AG04450 (cell line): ENCODE measurements at regions of chr10 and their contacts with region 1.

Region 1: DNA sequence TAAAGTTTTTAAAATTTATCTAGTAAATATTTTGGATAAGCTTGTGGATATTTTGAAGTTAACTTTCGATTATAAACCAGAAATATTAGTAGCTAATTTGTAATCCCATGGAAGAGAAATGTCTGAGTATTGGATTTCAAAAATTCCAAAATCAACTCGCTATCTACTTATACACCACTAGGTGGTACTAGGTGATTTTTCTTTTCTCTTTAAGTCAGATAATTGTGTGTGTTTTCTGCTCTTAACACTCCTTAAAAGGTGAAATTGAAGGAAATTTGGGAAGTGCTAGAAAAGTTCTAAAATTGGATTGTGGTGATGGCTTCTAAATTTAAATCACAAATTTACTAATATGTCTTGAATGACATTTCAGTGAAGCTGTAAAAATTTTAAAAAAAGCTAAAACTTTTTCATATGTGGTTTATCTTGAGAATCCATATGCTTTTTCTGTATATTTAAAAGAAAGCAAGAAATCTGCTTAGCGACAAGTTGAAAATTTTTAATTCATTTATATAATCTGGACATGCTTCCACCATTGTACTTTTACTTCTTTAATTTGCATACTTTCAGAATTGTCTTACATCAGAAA is 90.2 kb downstream of the IPMK start:
- DNase-seq: no peak
- H3K4me3 ChIP-seq: no peak overlapping the region
- H3K27ac ChIP-seq: no peak overlapping the region
- H3K27me3 ChIP-seq: no peaks in the 10 kb centered on the region
- CTCF ChIP-seq: peak; percentile 66

Region 2: GRCh38 chr10:58028597-58029366 is 148.7 kb before region 1 on chr10:
- CTCF ChIA-PET with region 1: no interaction called
- POLR2A ChIA-PET with region 1: no interaction called
- DNase-seq: peak; percentile 70
- H3K4me3 ChIP-seq: no peak overlapping the region
- H3K27ac ChIP-seq: no peak overlapping the region
- H3K27me3 ChIP-seq: no peaks in the 10 kb centered on the region
- CTCF ChIP-seq: no peak

Region 3: DNA sequence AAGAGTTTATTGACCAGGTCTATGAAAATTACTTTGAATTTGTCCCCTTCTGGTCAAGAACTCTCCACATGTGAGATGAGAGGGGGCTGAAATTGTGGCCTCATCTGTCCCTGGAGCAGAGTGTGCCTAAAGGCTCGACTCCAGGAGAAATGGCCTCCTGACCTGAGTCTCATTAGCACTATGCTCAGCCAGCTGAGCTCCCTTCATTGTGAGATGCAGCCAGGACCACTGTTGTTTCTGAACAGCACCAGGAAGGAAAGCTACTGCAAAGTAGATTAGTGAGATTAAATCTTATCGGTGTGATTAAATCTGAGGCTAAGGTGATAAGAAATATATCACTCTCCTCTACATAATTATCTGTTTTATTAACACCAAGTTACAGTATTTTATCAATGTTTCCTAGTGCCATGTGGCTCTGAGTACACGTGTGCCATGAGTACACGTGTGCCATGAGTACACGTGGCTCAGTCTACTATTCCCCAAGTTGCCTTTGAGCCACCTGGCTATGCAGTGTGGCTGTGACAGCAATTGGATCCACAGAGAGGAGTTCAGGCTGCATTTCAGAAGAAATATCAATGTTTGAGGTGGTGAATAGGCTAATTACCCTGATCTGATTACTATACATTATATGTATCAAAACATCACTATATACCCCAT is 36.6 kb before region 1 on chr10:
- CTCF ChIA-PET with region 1: no interaction called
- POLR2A ChIA-PET with region 1: no interaction called
- DNase-seq: no peak
- H3K4me3 ChIP-seq: no peak overlapping the region
- H3K27ac ChIP-seq: no peak overlapping the region
- H3K27me3 ChIP-seq: no peaks in the 10 kb centered on the region
- CTCF ChIP-seq: no peak

Region 4: DNA sequence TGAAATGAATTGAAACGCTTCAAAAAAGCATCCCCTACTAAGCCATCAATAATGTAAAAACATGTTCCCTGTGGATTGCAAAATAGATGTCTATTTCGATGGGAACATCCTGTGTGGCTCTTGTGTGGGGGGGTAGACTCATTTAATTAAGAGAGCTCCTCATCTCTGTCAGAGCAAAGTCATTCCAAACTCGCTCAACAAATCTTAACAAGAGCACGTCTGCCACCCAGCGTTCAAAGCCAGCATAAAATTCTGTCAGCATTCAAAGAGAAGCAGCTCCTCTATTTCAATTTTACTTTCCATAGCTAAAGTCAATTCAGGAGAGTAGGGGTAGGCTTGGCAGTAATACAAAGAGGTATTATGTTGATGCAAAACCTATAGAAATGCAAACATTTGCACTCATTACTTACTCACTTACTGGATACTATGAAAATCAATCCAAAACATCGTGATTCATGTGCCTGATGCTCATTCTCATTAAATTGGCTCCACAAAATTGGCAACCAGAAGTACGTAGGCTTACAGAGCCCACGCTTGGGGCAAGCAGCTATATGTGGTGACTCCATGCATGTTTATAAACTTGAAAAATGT is 24.7 kb before region 1 on chr10:
- CTCF ChIA-PET with region 1: interaction called, 19 read pairs
- POLR2A ChIA-PET with region 1: no interaction called
- DNase-seq: peak; percentile 23
- H3K4me3 ChIP-seq: no peak overlapping the region
- H3K27ac ChIP-seq: no peak overlapping the region
- H3K27me3 ChIP-seq: no peaks in the 10 kb centered on the region
- CTCF ChIP-seq: peak; percentile 75

Region 5: DNA sequence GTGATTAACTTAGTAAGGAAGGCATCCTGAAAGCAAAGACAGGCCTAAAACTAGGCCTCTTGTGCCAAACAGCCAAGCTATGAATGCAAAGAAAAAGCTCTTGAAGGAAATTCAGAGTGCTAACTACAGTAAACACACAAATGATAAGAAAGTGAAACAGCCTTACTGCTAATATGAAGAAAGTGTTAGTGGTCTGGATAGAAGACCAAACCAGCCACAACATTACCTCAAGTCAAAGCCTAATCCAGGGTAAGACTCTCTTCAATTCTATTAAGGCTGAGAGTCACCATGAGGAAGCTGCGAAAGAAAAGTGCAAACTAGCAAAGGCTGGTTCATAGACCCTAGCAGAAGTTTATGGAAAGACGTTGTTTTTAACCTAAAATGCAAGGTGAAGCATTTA is 24.2 kb after region 1 on chr10:
- CTCF ChIA-PET with region 1: interaction called, 12 read pairs
- POLR2A ChIA-PET with region 1: no interaction called
- DNase-seq: no peak
- H3K4me3 ChIP-seq: no peak overlapping the region
- H3K27ac ChIP-seq: no peak overlapping the region
- H3K27me3 ChIP-seq: no peaks in the 10 kb centered on the region
- CTCF ChIP-seq: no peak

Region 6: DNA sequence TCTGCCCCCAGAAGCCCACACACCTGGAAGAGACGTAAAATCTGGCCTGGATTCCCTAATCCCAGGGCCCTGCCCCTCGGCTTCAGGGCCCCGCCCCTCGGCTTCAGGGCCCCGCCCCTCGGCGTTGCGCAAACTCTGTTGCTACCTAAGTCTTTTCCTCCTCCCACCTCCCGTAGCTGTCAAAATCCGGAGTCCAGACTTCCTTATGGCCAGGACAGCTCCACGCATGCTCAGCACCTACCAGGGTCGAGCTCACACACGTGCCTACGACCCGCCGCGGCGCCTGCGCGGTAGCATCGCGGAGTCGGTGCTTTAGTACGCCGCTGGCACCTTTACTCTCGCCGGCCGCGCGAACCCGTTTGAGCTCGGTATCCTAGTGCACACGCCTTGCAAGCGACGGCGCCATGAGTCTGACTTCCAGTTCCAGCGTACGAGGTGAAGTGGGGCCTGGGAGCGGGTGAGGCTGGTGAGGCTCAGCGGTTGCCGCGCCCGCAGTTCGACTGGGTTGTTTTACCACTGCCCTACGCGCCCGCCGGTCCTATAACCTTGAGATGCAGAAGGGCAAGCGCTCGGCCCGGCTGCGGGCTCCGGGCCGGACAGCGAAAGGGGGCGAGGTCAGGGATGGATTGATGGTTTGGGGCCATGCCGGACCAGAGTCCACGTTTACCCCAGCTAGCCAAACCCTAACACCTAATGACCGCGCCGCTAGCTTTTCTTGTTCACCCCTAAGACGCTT is 91.6 kb after region 1 on chr10 and contains the start of gene CISD1:
- CTCF ChIA-PET with region 1: interaction called, 12 read pairs
- POLR2A ChIA-PET with region 1: no interaction called
- DNase-seq: peak; percentile 99
- H3K4me3 ChIP-seq: peak within 1 kb of the TSS; percentile 87
- H3K27ac ChIP-seq: peak within 1 kb of the TSS; percentile 94
- H3K27me3 ChIP-seq: no peaks in the 10 kb centered on the region
- CTCF ChIP-seq: no peak
- polyA plus RNA-seq, gene CISD1: 59.9 and 80.0 TPM in 2 replicates

Region 7: GRCh38 chr10:58291538-58292174 is 114.2 kb after region 1 on chr10:
- CTCF ChIA-PET with region 1: interaction called, 266 read pairs
- POLR2A ChIA-PET with region 1: no interaction called
- DNase-seq: no peak
- H3K4me3 ChIP-seq: no peak overlapping the region
- H3K27ac ChIP-seq: no peak overlapping the region
- H3K27me3 ChIP-seq: no peaks in the 10 kb centered on the region
- CTCF ChIP-seq: peak; percentile 82

Region 8: GRCh38 chr10:58305821-58306220 is 128.4 kb after region 1 on chr10:
- CTCF ChIA-PET with region 1: interaction called, 48 read pairs
- POLR2A ChIA-PET with region 1: no interaction called
- DNase-seq: no peak
- H3K4me3 ChIP-seq: no peak overlapping the region
- H3K27ac ChIP-seq: no peak overlapping the region
- H3K27me3 ChIP-seq: peaks cover 2% of the 10 kb centered on the region
- CTCF ChIP-seq: no peak

Region 9: DNA sequence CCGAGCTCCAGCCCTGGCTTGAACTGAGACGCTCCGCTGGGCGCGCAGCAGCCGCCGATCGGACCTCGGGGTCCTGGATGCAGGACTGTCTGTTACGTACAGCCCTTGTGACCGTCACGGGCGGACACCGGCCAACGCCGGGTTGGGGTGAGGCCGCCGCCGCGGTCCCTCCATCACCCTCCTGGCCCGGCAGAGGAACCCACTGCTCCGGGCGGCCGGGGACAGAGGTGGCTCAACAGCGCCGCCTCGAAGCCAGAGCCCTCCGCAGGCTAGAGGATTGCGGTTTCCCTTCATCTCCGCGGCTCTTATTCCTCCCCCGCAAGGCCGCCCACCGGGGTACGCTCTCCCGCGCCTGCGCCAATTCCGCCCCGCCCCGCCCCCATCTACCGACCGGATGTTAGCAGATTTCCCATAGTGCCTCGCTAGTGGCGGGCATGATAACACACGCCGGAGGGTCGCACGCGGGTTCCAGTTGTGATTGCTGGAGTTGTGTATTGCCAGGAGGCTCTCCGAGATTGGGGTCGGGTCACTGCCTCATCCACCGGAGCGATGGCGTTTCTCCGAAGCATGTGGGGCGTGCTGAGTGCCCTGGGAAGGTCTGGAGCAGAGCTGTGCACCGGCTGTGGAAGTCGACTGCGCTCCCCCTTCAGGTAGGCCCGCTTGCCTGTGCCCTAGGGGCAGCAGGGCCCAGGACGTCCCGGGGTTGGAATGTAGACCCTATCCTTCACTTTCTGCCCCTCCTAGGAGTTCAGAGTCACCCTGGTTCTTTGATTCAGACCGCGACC is 207.7 kb after region 1 on chr10 and contains the start of gene TFAM:
- CTCF ChIA-PET with region 1: interaction called, 26 read pairs
- POLR2A ChIA-PET with region 1: no interaction called
- DNase-seq: peak; percentile 88
- H3K4me3 ChIP-seq: peak within 1 kb of the TSS; percentile 93
- H3K27ac ChIP-seq: peak within 1 kb of the TSS; percentile 74
- H3K27me3 ChIP-seq: no peaks in the 10 kb centered on the region
- CTCF ChIP-seq: peak; percentile 70
- polyA plus RNA-seq, gene TFAM: 14.1 and 17.0 TPM in 2 replicates